Common myeloid progenitor, CD34-positive (primary cell): ENCODE measurements at regions of chr2 and their contacts with region 1.

Region 1: DNA sequence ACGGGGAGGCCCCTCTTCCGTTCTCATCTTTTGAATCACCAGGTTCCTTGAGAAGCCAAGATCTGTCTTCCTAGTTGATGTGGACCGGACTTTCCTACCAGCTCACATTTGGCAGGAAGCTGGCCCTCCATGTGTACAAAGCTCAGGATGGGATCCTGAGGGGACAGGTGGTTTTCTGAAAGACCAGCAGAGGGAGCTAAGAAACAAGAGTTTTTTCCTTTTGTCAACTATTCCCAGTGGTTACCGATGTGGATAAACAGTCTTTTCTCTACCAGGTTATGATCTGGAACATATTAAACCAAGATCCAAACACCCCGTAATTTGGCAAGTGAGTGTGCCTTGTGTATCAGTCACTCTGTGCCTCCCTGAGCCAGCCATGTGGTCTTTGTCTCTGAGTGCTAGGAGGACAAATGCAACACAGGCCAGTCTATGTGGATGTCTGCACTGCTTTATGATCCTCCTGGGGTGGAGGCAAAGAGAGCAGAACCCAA is 25.1 kb upstream of the ARHGAP25 start:
- DNase-seq: peak; percentile 53 to 57 (median 57)
- H3K4me3 ChIP-seq: no peak overlapping the region
- H3K27ac ChIP-seq: no peak overlapping the region
- H3K4me1 ChIP-seq: peaks cover 2 to 22% (median 16%) of the 10 kb centered on the region in 4 experiments
- H3K27me3 ChIP-seq: no peaks in the 10 kb centered on the region

Region 2: GRCh38 chr2:68454719-68455118 is 254.7 kb before region 1 on chr2:
- CTCF ChIA-PET with region 1: no interaction called
- POLR2A ChIA-PET with region 1: no interaction called
- DNase-seq: no peak
- H3K4me3 ChIP-seq: no peak overlapping the region
- H3K27ac ChIP-seq: no peak overlapping the region
- H3K4me1 ChIP-seq: peaks cover 0 to 6% (median 0%) of the 10 kb centered on the region in 4 experiments
- H3K27me3 ChIP-seq: no peaks in the 10 kb centered on the region

Region 3: GRCh38 chr2:68689553-68690537 is 19.6 kb before region 1 on chr2:
- CTCF ChIA-PET with region 1: interaction called, 10 read pairs
- POLR2A ChIA-PET with region 1: no interaction called
- DNase-seq: peak; percentile 40 to 84 (median 73)
- H3K4me3 ChIP-seq: peak overlapping the region in 5 of 7 experiments; percentile 16 to 49 (median 41)
- H3K27ac ChIP-seq: peak overlapping the region in 1 of 2 experiments; percentile 22
- H3K4me1 ChIP-seq: peaks cover 19 to 42% (median 24%) of the 10 kb centered on the region in 4 experiments
- H3K27me3 ChIP-seq: no peaks in the 10 kb centered on the region

Region 4: GRCh38 chr2:68726608-68727367 is 17.3 kb after region 1 on chr2:
- CTCF ChIA-PET with region 1: interaction called, 18 read pairs
- POLR2A ChIA-PET with region 1: no interaction called
- DNase-seq: peak; percentile 98 to 100 (median 99)
- H3K4me3 ChIP-seq: peak overlapping the region in 4 of 7 experiments; percentile 13 to 37 (median 26)
- H3K27ac ChIP-seq: peak overlapping the region; percentile 36 to 73
- H3K4me1 ChIP-seq: peaks cover 30 to 92% (median 82%) of the 10 kb centered on the region in 4 experiments
- H3K27me3 ChIP-seq: no peaks in the 10 kb centered on the region

Region 5: GRCh38 chr2:68734688-68735525 is 25.4 kb after region 1 on chr2 and contains the start of gene ARHGAP25:
- CTCF ChIA-PET with region 1: interaction called, 62 read pairs
- POLR2A ChIA-PET with region 1: no interaction called
- DNase-seq: peak; percentile 59 to 95 (median 89)
- H3K4me3 ChIP-seq: peak within 1 kb of the TSS in 6 of 7 experiments; percentile 71 to 90 (median 86)
- H3K27ac ChIP-seq: peak within 1 kb of the TSS; percentile 71 to 85
- H3K4me1 ChIP-seq: peaks cover 59 to 93% (median 77%) of the 10 kb centered on the region in 4 experiments
- H3K27me3 ChIP-seq: no peaks in the 10 kb centered on the region